ENCODE measurements at regions of chr1 and their contacts with region 1.

Region 1: GRCh38 chr1:117128323-117129079 is 7.0 kb upstream of the TRIM45 start:
- DNase-seq: no peak
- ATAC-seq: peak; percentile 41 to 57
- H3K4me3 ChIP-seq: no peak overlapping the region
- H3K27ac ChIP-seq: peak overlapping the region in 3 of 4 donors; percentile 4 to 52 (median 29)
- H3K4me1 ChIP-seq: peaks cover 7 to 16% of the 10 kb centered on the region in 2 donors
- H3K27me3 ChIP-seq: no peaks in the 10 kb centered on the region
- CTCF ChIP-seq: peak; percentile 57 to 68 (median 63)
- POLR2A ChIP-seq: no peak

Region 2: DNA sequence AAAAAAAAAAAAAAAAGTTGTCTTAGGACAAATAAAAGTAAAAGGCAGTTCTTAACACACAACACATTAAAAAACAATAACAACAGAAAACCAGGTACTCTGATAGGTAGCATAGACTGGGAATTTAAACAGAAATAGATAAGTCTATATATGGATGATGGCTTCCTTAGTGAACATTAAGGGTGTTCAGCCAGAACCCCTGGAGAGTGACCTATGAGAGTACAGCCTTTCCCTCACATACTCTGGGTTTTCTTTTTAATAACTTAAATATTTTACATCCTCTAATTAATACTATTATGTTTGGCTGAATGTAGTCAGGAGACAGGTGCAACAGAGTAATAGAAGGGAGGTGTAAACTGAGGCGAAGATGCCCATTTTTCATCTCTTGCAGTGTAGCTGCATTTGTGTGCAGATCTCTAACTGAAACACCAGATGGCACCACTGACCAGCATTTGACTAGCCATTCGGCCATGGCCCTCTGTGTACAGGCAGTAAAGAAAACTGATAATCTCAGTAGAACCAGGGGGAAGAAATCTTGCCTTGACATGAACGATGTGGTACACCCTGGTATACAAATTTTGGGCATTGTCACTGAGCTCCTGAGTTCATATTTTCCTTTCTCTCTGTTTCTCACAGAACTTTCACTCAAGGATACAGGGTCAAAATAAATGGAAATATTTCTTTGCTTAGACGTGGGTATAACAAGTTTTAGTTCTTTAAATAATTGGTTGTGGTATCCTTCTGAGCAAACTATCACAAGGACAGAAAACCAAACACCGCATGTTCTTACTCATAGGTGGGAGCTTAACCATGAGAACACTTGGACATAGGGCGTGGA is 60.7 kb before region 1 on chr1:
- in situ Hi-C with region 1: loop called in 2 of 4 experiments (anchors 5 kb)
- intact Hi-C with region 1: loop called (anchors 1 kb)
- DNase-seq: peak; percentile 27 to 50
- ATAC-seq: peak; percentile 88 to 96
- H3K4me3 ChIP-seq: no peak overlapping the region
- H3K27ac ChIP-seq: no peak overlapping the region
- H3K4me1 ChIP-seq: no peaks in the 10 kb centered on the region
- H3K27me3 ChIP-seq: no peaks in the 10 kb centered on the region
- CTCF ChIP-seq: peak; percentile 74 to 87 (median 82)
- POLR2A ChIP-seq: no peak

Region 3: DNA sequence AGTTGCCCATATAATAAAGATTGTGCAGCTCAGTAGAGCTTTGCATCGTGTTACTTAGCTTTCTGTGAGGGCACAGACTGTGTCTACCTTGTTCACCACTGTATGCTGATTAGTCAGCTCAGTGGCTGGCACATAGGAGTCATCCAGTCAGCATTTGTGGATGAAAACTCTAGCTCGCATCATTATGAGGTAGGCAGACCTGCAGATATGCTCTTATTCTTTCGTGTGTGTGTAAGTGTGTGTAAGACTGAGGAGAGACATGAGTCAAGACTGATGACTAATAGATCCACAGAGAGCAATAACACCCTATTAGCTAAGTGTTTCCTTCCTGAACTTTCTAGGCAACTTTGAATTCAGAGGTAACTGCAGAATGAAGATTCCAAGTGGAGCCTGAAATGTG is 51.2 kb before region 1 on chr1:
- in situ Hi-C with region 1: loop called (anchors 5 kb)
- intact Hi-C with region 1: no loop called
- DNase-seq: no peak
- ATAC-seq: no peak
- H3K4me3 ChIP-seq: no peak overlapping the region
- H3K27ac ChIP-seq: no peak overlapping the region
- H3K4me1 ChIP-seq: peaks cover 0 to 5% of the 10 kb centered on the region in 2 donors
- H3K27me3 ChIP-seq: no peaks in the 10 kb centered on the region
- CTCF ChIP-seq: no peak
- POLR2A ChIP-seq: no peak

Region 4: GRCh38 chr1:117110774-117111173 is 17.7 kb before region 1 on chr1:
- in situ Hi-C with region 1: no loop called
- intact Hi-C with region 1: no loop called
- DNase-seq: no peak
- ATAC-seq: no peak
- H3K4me3 ChIP-seq: no peak overlapping the region
- H3K27ac ChIP-seq: no peak overlapping the region
- H3K4me1 ChIP-seq: peaks cover 0 to 4% of the 10 kb centered on the region in 2 donors
- H3K27me3 ChIP-seq: no peaks in the 10 kb centered on the region
- CTCF ChIP-seq: no peak
- POLR2A ChIP-seq: no peak

Region 5: DNA sequence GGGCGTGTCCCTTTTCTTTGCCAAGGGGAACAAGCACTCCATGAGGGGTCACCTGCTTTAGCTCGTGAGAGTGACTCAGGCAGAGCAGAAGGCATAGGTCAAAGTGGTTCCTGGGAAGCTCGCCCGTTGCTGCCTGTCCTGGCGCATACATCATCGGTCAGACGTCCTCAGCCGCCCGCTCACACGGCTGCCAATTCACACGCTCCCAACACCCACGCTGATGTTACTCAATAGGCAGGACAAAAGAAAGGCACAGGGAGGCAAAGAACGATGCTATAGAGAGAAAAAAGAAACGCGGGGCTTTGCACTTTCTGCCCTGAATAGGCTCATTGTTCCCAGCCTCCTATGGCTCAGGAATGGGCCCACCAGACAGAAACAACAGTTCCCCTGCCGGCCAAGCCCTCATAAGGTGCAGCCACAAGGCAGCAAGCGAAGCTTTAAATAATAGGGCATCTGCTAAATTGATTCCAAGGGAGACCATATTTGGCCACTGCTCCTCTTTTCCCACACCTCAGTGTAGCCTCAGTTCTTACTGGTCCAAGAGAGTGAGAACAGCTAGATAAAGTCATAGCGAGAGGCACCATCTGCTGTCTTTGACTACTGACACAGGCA is 43.5 kb after region 1 on chr1:
- in situ Hi-C with region 1: no loop called
- intact Hi-C with region 1: no loop called
- DNase-seq: peak; percentile 44 to 91
- ATAC-seq: peak; percentile 81 to 96
- H3K4me3 ChIP-seq: no peak overlapping the region
- H3K27ac ChIP-seq: peak overlapping the region; percentile 14 to 71 (median 50)
- H3K4me1 ChIP-seq: no peaks in the 10 kb centered on the region
- H3K27me3 ChIP-seq: no peaks in the 10 kb centered on the region
- CTCF ChIP-seq: no peak
- POLR2A ChIP-seq: no peak

Measured in gastrocnemius medialis (tissue), 4 donors.